AG04450 (cell line): ENCODE measurements at regions of chr4 and their contacts with region 1.

Region 1: GRCh38 chr4:112031712-112032328 is 113.4 kb upstream of the FAM241A start:
- DNase-seq: peak; percentile 10
- H3K4me3 ChIP-seq: no peak overlapping the region
- H3K27ac ChIP-seq: no peak overlapping the region
- H3K27me3 ChIP-seq: no peaks in the 10 kb centered on the region
- CTCF ChIP-seq: peak; percentile 81

Region 2: DNA sequence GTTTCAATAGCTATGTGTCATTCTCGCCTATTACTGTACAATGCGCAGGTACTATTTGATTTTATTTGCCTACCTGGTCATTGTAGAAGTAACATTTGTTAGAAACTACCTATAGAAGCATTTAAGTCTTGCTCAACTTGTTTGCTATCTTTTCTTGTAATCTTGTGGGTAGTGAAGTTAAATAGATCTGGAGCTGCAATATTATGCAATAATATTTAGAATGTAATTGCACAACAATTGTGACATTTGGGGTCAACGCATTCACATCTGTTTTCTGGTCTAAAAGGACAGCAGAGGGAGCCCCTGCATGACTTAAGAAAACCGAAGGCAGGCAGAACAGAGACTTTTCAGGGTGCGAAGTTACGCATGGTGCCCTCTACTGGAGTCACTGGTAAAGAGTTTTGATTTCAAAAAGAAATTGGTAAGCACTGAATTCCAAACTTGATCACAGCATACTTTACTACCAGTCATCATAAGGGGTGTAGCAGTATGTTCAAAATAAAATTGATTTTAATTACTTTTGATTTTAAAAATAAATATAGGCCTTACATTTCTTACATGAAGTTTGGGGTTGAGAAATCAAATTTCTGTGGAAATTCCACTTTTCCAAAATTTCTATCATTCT is 389.8 kb before region 1 on chr4:
- CTCF ChIA-PET with region 1: interaction called, 22 read pairs
- POLR2A ChIA-PET with region 1: no interaction called
- DNase-seq: peak; percentile 64
- H3K4me3 ChIP-seq: no peak overlapping the region
- H3K27ac ChIP-seq: no peak overlapping the region
- H3K27me3 ChIP-seq: no peaks in the 10 kb centered on the region
- CTCF ChIP-seq: peak; percentile 87

Region 3: GRCh38 chr4:113222471-113222870 is 1190.7 kb after region 1 on chr4:
- CTCF ChIA-PET with region 1: no interaction called
- POLR2A ChIA-PET with region 1: no interaction called
- DNase-seq: no peak
- H3K4me3 ChIP-seq: no peak overlapping the region
- H3K27ac ChIP-seq: no peak overlapping the region
- H3K27me3 ChIP-seq: no peaks in the 10 kb centered on the region
- CTCF ChIP-seq: no peak